GM10248 (cell line): ENCODE measurements at regions of chr1 and their contacts with region 1.

Region 1: GRCh38 chr1:65687428-65688214 is 105.1 kb upstream of the PDE4B start:
- DNase-seq: peak; percentile 63
- CTCF ChIP-seq: peak; percentile 95

Region 2: DNA sequence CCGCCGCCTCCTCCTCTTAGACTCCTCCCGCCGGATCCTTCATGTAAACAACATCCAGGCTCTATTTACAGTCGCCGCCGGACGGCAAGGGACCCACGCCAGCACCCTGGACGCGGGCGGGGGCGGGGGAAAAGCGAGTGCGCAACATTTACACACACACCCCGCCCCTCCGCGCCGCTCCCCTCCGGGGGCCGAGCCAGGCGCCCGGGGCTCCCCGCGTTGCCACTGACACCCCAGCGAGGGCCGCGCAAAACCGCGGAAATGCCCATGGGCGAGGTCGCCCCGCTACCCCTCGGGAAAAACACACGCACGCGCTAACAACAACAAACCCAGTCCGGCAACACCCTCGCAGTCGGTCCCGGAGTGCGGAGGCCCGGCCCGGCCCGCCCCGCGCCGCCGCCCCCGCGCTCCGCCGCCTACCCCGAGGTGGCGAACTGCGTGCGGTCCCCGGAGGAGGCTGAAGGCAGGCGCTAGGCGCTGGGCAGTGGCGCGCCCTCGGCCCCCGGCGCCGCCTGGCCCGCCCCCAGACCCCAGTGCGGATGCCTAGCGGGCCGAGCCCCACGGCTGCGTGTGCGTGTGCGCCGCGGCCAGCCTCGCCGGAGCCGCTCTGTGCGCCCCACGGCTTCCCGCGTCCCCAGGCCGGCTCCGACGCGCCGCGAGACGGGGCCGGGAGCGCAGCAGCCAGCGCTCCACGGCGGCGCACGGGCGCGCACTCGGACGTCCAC is 620.7 kb before region 1 on chr1:
- CTCF ChIA-PET with region 1: interaction called, 37 read pairs
- POLR2A ChIA-PET with region 1: no interaction called
- DNase-seq: peak; percentile 66
- CTCF ChIP-seq: no peak

Region 3: GRCh38 chr1:65214340-65215027 is 473.1 kb before region 1 on chr1:
- CTCF ChIA-PET with region 1: interaction called, 16 read pairs
- POLR2A ChIA-PET with region 1: no interaction called
- DNase-seq: no peak
- CTCF ChIP-seq: no peak

Region 4: DNA sequence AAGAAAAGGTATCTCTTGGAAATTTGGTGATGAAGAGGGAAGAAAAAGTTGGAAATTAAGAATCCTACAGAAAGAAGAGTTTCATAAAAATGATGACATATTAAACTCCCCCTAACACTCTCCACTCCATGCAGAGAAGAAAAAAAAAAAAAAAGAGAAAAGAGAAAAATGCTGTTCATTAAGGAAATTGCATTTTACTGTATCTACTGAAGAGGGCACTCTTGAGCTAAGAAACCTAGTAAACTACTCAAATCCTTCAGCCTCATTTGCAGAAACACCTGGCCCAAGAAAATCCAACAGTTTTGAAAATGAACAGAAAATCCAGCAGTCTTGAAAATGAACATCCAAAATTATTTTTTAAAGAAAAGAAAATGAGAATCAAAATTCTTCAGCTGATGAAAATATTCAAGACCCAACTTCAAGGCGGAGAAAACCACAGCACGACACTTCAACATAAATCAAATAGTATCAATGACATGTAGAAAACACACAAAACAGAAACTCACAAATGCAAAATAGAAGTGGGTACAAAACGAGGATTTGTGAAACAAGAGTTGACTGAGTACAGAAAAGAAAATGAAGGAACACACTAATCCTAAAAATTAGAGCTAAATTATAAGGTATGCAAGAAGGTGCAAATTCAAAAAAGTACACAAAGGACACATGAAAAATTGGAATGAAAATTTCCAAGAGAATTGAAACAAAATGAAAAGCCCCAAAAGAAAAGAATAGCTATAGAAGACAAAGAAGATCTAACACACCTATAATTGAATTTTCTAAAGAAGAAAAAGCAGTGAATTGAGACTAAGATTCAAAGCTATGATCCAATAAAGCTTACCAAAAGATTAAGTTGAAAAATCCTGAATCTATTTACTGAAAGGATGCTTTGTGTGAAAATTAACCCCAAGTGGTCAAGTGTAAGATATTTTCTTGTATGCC is 451.5 kb before region 1 on chr1:
- CTCF ChIA-PET with region 1: interaction called, 20 read pairs
- POLR2A ChIA-PET with region 1: no interaction called
- DNase-seq: peak; percentile 20
- CTCF ChIP-seq: peak; percentile 26

Region 5: DNA sequence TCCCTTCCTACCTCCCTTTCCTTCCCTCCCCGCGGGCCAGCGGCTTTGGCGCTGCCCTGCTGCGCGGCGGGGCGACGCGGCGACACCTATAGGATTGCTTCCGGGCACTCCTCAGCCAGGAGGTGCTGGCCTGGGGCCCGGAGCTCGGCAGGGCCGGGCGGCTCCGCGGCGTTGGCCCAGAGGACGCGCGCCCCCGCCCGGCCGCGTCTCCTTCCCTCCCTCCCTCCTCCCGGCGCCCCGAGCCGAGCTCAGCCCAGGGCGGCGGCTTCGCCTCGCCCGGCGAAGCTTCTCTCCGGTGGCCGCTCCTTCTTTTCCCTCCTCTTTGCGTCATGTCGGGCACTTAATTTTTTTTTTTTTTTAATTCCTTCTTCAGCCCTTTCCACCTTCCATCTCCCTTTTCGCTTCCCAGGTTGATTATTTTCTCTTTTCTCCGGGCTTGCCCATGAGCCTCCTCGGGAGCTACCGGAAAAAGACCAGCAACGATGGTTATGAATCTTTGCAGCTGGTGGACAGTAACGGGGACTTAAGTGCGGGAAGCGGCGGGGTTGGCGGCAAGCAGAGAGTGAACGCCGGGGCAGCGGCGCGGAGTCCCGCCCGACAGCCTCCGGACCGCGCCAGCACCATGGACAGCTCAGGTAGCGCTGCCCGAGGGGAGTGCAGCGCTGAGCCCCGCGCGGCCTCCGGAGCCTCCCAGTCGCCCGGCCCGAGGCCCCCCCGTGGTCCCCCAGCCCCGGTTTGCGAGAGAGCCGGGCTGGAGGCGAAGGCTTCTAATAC is 378.1 kb before region 1 on chr1 and contains the start of gene DNAJC6:
- CTCF ChIA-PET with region 1: no interaction called
- POLR2A ChIA-PET with region 1: no interaction called
- DNase-seq: peak; percentile 66
- CTCF ChIP-seq: no peak

Region 6: DNA sequence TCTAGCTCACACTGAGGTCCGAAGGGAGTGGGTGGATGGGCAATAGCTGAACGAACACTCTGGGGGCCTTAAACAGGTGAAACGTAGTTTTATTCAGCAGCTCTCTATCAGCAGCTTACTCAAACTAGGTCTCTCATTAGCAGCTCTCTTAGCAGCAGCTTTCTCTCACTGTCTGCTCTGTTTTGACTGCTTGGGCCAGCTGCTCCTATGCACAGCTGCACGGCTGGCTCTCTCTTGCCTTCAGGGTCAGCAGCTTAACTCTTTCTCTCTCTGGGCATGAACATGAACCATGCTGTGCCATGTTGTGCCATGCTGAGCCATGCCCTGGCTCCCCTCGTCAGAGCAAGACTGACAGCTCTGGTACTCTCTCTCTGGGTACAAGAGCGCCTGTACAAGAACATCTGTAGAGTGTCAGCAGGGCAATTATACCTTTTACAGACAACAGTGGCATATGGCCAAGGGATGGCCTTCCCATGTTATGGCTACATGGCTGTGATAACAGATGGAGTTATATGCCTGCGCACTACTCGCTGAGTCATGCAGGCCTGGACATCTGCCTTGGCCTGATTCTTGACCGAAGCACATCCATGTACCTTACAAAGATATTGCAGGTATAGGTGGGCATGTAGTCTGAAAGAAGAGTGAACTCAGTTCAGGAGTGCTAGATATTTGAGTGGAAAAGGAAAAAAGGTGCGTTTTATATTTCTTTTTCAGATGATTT is 114.8 kb before region 1 on chr1:
- CTCF ChIA-PET with region 1: no interaction called
- POLR2A ChIA-PET with region 1: no interaction called
- DNase-seq: no peak
- CTCF ChIP-seq: no peak

Region 7: DNA sequence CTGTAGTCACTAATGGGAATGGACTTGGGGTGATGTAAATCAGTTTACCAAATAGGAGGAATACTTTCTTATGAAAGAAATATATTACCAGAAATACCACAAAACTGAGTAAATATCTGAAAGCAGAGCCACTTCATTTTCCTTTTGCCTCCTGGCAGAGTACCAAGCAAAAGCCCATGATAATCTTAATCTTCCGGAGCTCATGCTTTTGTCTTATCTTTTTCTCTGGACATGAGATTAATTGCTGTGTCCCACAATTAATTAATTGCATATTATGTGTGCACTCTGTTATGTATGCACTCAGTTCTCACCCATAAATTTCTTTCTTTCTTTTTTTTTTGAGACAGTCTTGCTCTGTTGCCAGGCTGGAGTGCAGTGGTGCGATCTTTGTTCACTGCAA is 11.0 kb after region 1 on chr1:
- CTCF ChIA-PET with region 1: interaction called, 22 read pairs
- POLR2A ChIA-PET with region 1: no interaction called
- DNase-seq: no peak
- CTCF ChIP-seq: no peak

Region 8: GRCh38 chr1:65703853-65704252 is 16.2 kb after region 1 on chr1:
- CTCF ChIA-PET with region 1: interaction called, 22 read pairs
- POLR2A ChIA-PET with region 1: no interaction called
- DNase-seq: no peak
- CTCF ChIP-seq: no peak